Vagina (tissue), 2 donors: ENCODE measurements at regions of chr9 and their contacts with region 1.

Region 1: GRCh38 chr9:117399844-117400561 is 14.9 kb downstream of the ASTN2 start:
- DNase-seq: no peak
- H3K4me3 ChIP-seq: no peak overlapping the region
- H3K27ac ChIP-seq: no peak overlapping the region
- H3K4me1 ChIP-seq: no peaks in the 10 kb centered on the region
- H3K27me3 ChIP-seq: no peaks in the 10 kb centered on the region
- CTCF ChIP-seq: no peak
- POLR2A ChIP-seq: no peak

Region 2: GRCh38 chr9:117028103-117028858 is 371.7 kb before region 1 on chr9:
- intact Hi-C with region 1: loop called (anchors 10 kb)
- DNase-seq: no peak
- H3K4me3 ChIP-seq: no peak overlapping the region
- H3K27ac ChIP-seq: no peak overlapping the region
- H3K4me1 ChIP-seq: no peaks in the 10 kb centered on the region
- H3K27me3 ChIP-seq: no peaks in the 10 kb centered on the region
- CTCF ChIP-seq: no peak
- POLR2A ChIP-seq: no peak

Region 3: GRCh38 chr9:117508647-117509046 is 108.6 kb after region 1 on chr9:
- intact Hi-C with region 1: no loop called
- DNase-seq: no peak
- H3K4me3 ChIP-seq: no peak overlapping the region
- H3K27ac ChIP-seq: no peak overlapping the region
- H3K4me1 ChIP-seq: no peaks in the 10 kb centered on the region
- H3K27me3 ChIP-seq: no peaks in the 10 kb centered on the region
- CTCF ChIP-seq: no peak
- POLR2A ChIP-seq: no peak